Right cardiac atrium (tissue), 5 donors: ENCODE measurements at regions of chr3 and their contacts with region 1.

Region 1: DNA sequence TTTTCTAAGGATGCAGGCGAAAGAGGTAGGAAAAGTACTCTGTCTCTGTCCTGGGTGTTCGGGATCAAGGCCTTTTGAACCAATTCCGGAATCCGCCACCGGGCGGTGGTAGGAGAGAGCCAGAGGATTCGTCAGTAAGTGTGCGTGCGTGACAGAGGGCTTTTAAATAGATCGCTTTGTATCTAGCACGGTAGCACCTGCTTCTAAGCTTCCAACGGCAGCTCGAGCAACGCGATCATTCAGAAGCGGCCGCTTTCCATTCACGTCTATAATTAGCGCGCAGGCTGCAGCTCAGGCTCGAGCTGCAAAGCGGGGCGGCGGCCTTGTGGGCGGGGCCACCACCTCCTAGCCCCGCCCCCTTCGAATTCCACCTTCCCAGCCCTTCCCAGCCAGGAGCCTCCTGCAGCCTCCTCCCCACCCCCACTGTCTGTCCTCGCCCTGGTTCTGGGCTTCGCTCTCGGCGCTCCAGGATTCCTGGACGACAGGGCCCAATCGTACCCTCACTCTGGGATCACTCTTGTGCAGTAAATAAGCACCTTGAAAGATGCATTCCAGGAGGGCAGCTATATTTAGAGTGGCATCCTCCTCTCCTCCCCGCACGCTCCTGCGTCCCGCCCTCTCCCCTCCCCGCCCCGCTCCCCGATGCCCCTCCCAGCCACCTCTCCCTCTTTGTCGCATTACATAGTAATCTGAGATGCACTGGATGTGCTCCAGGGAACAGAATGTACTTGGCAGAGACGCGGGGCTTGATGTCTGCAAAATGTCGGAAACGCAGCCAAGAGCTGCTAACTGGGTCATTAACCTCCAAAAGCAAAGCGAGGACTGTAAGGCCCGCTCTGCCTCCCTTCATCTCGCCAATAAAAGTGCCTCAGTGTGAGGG is 224.1 kb upstream of the TPRG1 start:
- DNase-seq: peak; percentile 95 to 97 (median 96)
- ATAC-seq: peak; percentile 91 to 92
- H3K4me3 ChIP-seq: peak overlapping the region; percentile 41
- H3K27ac ChIP-seq: peak overlapping the region; percentile 97
- H3K4me1 ChIP-seq: peaks cover 30% of the 10 kb centered on the region
- H3K27me3 ChIP-seq: no peaks in the 10 kb centered on the region

Region 2: GRCh38 chr3:188594139-188594538 is 353.5 kb before region 1 on chr3:
- intact Hi-C with region 1: loop called in 1 of 4 experiments (anchors 10 kb)
- DNase-seq: no peak
- ATAC-seq: peak; percentile 85 to 90
- H3K4me3 ChIP-seq: no peak overlapping the region
- H3K27ac ChIP-seq: no peak overlapping the region
- H3K4me1 ChIP-seq: peaks cover 2% of the 10 kb centered on the region
- H3K27me3 ChIP-seq: no peaks in the 10 kb centered on the region

Region 3: GRCh38 chr3:188830893-188831292 is 116.7 kb before region 1 on chr3:
- intact Hi-C with region 1: no loop called
- DNase-seq: no peak
- ATAC-seq: peak in 1 of 2 donors; percentile 50
- H3K4me3 ChIP-seq: no peak overlapping the region
- H3K27ac ChIP-seq: no peak overlapping the region
- H3K4me1 ChIP-seq: peaks cover 8% of the 10 kb centered on the region
- H3K27me3 ChIP-seq: no peaks in the 10 kb centered on the region

Region 4: GRCh38 chr3:188881954-188882641 is 65.5 kb before region 1 on chr3:
- intact Hi-C with region 1: no loop called
- DNase-seq: no peak
- ATAC-seq: peak in 1 of 2 donors; percentile 26
- H3K4me3 ChIP-seq: no peak overlapping the region
- H3K27ac ChIP-seq: no peak overlapping the region
- H3K4me1 ChIP-seq: no peaks in the 10 kb centered on the region
- H3K27me3 ChIP-seq: no peaks in the 10 kb centered on the region

Region 5: GRCh38 chr3:189056646-189057335 is 109.2 kb after region 1 on chr3:
- intact Hi-C with region 1: no loop called
- DNase-seq: peak in 1 of 3 donors; percentile 22
- ATAC-seq: no peak
- H3K4me3 ChIP-seq: no peak overlapping the region
- H3K27ac ChIP-seq: no peak overlapping the region
- H3K4me1 ChIP-seq: no peaks in the 10 kb centered on the region
- H3K27me3 ChIP-seq: no peaks in the 10 kb centered on the region

Region 6: DNA sequence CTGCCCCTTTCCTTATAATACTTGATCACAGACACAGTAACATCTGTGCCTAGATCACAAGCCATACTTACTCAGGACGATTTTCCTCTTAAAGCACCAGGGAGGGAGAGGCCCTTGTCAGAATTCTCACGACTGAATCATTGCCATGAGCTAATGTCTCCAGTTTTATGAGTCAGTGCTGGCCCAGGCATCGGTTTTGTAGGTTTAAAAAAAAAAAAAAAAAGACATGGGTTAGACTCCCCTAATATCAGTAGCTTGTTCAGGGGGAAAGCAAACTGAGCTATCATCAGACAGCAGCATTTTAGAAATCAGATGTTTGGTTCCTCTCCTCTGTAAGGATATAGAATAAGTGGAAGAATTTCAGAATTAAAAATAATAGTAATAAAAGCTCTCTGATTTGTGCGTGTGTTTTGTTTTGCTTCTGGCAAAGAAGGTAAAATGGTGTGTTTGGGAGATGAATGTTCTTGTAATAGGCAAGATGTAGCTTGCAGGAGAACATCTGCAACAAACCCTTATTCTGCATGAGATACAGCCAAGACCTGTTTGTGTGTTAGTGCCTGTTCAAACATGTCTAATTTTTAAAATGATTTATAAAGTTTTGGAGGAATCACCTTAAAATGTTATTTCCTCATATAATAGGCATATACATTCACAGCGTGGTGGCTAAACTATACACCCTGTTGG is 877.1 kb after region 1 on chr3:
- intact Hi-C with region 1: no loop called
- DNase-seq: peak in 1 of 3 donors; percentile 16
- ATAC-seq: peak; percentile 48 to 67
- H3K4me3 ChIP-seq: no peak overlapping the region
- H3K27ac ChIP-seq: no peak overlapping the region
- H3K4me1 ChIP-seq: no peaks in the 10 kb centered on the region
- H3K27me3 ChIP-seq: no peaks in the 10 kb centered on the region